ENCODE measurements at regions of chr5 and their contacts with region 1.

Region 1: DNA sequence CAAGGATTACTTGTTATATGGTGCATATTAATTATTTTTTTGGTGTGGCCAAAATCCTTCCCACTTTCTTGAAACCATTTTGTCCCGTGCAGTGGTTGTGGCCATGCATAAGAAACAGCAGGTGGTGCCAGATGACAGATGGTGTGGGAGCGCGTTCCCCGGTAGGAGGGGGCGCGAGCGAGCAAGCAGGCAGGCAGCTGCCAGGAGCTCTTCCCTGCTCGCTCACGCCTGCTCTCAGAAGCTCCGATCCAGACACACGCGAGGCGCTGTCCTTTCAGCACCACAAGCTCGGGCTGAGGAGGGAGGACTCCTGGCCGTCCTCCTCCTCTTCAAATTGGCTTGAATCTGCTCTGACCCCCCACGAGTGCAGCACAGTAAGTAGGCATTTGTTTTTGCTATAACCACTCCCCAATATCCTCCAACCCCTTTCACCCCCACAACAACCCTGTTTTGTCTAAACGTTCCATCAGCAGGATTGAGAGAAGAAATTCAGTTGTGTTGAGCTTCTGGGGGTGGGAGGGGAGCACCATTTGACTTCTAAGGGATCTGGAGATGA is at the start of gene NSG2:
- DNase-seq: peak; percentile 65
- H3K4me3 Mint-ChIP-seq: no peak within 1 kb of the TSS
- H3K27ac Mint-ChIP-seq: no peak within 1 kb of the TSS
- H3K4me1 Mint-ChIP-seq: no peaks in the 10 kb centered on the region
- H3K27me3 Mint-ChIP-seq: peaks cover 3% of the 10 kb centered on the region

Region 2: DNA sequence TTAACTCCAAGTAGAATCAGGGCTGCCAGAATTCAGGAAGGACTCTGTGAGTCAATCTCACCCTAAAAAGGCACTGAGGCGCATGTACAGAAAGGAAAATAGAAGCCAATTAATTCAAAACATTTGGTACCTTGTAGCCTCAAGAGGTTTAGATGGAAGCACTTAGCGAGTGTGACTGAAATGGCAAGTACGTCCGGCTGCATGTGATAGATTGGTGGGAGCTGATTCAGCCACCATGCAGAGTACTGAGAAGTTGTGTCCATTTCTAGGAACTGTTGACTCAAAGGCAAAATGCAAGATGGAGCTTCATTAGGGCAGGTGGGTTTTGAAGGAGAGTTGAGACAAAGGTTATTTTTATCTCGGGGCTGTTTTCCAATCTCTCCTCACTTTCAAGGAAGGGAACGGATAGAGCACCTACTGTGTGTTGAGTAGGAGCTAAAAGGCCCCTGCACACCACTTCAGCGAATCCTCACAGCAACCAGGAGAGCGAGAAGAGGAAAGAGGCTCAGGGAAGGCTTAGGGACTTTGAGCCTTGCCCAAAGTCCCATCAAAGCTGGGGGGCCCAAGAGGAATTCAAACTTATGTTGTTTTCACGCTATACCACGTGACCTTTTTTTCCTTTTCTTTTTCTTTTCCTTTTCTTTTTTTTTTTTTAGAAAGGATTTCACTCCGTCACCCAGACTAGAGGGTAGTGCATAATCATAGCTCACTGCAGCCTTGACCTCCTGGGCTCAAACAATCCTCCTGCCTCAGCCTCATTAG is 192.0 kb before region 1 on chr5:
- CTCF ChIA-PET with region 1: no interaction called
- DNase-seq: no peak
- H3K4me3 Mint-ChIP-seq: no peak overlapping the region
- H3K27ac Mint-ChIP-seq: no peak overlapping the region
- H3K4me1 Mint-ChIP-seq: no peaks in the 10 kb centered on the region
- H3K27me3 Mint-ChIP-seq: peaks cover 40% of the 10 kb centered on the region

Region 3: GRCh38 chr5:174311531-174312269 is 266.2 kb after region 1 on chr5:
- CTCF ChIA-PET with region 1: interaction called, 11 read pairs
- DNase-seq: peak; percentile 74
- H3K4me3 Mint-ChIP-seq: no peak overlapping the region
- H3K27ac Mint-ChIP-seq: no peak overlapping the region
- H3K4me1 Mint-ChIP-seq: peaks cover 4% of the 10 kb centered on the region
- H3K27me3 Mint-ChIP-seq: peaks cover 32% of the 10 kb centered on the region

Measured in activated naive CD4-positive, alpha-beta T cell treated with anti-CD3 and anti-CD28 coated beads, Interleukin-2, amount 10 ng/mL, durations not matched to agents 7 days and 5 days (primary cell).